ENCODE measurements at regions of chr19 and their contacts with region 1.

Region 1: DNA sequence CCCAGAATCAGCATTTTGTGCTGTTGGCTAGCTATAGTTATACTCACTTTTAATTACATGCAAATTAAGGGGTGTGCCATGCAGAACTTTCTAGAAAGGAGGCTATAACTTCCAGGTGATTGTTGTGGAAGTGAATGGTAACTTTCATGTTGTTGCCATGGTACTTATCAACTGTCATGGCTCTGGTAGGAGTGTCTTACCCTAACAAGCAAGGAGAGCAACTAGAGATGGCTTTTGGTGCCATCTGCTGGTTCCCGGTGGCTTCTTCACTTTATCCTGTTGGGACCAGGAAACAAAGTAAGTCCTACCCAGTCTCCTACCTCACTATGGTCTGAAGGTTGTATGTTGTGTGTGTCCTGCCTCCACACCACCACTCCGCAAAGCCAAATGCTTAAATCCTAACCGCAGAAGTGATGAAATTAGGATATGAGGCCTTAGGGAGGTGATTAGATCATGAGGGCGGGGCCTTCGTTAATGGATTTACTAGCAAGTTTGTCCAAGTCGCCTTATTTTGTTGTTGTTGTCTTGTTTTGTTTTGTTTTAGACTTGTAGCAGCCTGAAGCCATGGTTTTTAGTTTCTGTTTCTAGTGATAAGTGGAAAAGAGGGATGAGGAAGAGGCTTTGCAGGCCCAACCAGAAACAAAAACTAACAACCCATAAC is 22.6 kb downstream of the FBXL12 start:
- DNase-seq: peak; percentile 80
- ATAC-seq: peak; percentile 12

Region 2: DNA sequence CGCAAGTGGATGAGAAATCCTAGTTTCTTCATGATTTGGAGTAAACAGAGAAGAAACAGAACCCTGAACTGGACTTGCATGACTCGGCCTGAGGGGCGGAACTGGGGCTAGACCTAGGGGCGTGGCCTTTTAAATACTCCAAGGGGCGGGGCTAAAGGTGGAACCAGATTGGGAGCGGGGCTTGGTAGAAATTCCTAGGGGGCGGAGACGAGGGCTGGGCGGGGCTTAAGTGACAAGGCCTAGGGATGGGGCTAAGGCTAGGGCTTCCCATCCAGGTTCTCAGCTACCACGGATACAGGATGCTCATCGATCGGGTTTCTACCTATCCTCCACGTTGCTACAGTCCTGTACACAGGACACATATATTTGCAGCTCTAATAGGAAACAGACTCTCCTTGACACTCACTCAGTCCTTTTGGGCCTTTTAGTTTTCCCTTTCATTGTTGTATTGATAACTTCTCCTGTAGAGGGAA is 486.2 kb before region 1 on chr19:
- intact Hi-C with region 1: loop called (anchors 5 kb)
- DNase-seq: peak; percentile 93
- ATAC-seq: peak; percentile 95

Measured in left ventricle myocardium superior (tissue), 1 donor.